Motor neuron (in vitro differentiated cells): ENCODE measurements at regions of chr19 and their contacts with region 1.

Region 1: DNA sequence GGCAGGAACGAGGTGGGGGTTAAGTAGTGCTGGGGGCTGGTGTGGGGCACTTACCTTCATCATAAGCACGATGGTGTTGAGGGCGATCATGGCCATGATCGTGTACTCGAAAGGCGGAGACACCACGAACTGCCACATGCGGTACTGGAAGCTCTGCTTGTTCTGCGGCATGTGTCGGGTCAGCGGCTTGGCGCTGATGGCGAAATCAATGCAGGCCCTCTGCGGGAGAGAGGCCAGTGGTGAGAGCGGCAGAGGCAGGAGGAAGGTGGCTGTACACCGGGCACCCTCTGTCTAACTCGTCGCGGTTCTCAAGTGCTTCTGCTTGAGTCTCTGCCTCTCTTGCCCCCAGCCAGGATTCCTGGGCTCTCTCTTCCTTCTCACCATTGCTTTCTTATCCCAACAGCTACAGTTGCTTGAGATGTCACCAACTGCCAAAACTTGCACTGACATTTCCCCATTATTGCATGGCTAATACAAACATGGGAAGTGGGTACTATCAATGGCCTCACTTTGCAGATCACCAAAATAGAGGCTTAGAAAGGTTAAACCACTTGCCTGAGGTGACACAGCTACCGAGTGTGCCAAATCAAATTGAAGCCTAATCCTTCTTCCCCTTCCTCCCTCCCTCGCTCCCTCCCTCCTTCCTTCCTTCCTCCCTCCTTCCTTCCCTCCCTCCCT is 105.0 kb downstream of the IER2 start:
- ATAC-seq: no peak
- H3K4me3 ChIP-seq: no peak overlapping the region
- H3K27ac ChIP-seq: no peak overlapping the region
- H3K4me1 ChIP-seq: no peaks in the 10 kb centered on the region

Region 2: DNA sequence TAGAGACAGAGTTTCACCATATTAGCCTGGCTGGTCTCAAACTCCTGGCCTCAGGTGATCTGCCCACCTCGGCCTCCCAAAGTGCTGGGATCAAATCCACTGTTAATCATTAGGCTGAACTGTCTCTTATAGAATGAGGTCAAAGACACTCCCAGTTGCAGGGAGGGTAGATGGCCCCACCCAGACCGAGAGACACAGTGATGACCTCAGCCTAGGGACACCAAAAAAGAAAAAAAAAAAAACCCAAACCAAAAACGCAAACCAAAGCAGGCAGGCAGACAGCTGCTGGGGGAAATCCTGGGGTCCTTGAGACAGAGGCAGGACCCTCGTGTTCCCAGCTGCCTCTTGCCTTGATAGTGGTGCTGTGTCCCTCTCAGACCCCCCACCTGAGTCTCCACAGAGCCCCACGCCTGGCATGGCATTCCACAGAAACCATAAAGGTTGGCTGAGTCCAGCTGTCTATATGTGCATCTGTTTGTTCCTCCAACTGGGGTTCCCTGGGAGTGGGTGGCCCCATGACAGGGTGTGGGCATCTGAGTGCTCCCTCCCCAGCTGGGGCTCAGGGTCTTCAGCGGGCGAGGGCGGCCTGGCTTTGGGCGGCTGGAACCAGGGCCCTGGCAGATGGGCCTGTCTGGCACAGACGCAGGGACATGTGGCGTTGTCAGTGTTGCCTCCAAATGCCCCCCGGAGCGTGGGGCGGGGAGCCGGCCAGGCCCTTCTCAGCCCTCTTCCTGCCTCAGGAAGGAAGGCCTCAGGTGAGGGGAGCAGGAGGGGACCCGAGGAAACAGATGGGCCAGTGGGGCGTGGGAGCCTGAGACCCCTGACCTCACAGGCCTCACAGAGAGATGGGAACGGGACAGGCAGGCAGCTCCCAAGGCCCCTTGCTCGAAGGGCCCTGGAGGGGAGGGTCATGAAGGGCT is 280.6 kb before region 1 on chr19:
- in situ Hi-C with region 1: loop called in 4 of 9 experiments (anchors 10 to 25 kb)
- ATAC-seq: peak in 6 of 8 experiments; percentile 7 to 85 (median 14)
- H3K4me3 ChIP-seq: no peak overlapping the region
- H3K27ac ChIP-seq: no peak overlapping the region
- H3K4me1 ChIP-seq: no peaks in the 10 kb centered on the region

Region 3: GRCh38 chr19:13195678-13196077 is 59.5 kb before region 1 on chr19:
- in situ Hi-C with region 1: loop called in 1 of 9 experiments (anchors 10 kb)
- ATAC-seq: no peak
- H3K4me3 ChIP-seq: no peak overlapping the region
- H3K27ac ChIP-seq: no peak overlapping the region
- H3K4me1 ChIP-seq: no peaks in the 10 kb centered on the region

Region 4: GRCh38 chr19:15177269-15178116 is 1922.3 kb after region 1 on chr19:
- in situ Hi-C with region 1: no loop called
- ATAC-seq: peak; percentile 84 to 96 (median 94)
- H3K4me3 ChIP-seq: peak overlapping the region; percentile 28 to 39 (median 37)
- H3K27ac ChIP-seq: no peak overlapping the region
- H3K4me1 ChIP-seq: peaks cover 6 to 7% of the 10 kb centered on the region in 2 donors